ENCODE measurements at regions of chr21 and their contacts with region 1.

Region 1: GRCh38 chr21:31580866-31581276 is 78.6 kb upstream of the SOD1 start:
- DNase-seq: peak; percentile 83
- ATAC-seq: peak; percentile 82
- H3K4me3 Mint-ChIP-seq: no peak overlapping the region
- H3K27ac Mint-ChIP-seq: no peak overlapping the region
- H3K4me1 Mint-ChIP-seq: no peaks in the 10 kb centered on the region
- H3K27me3 Mint-ChIP-seq: peaks cover 3% of the 10 kb centered on the region

Region 2: DNA sequence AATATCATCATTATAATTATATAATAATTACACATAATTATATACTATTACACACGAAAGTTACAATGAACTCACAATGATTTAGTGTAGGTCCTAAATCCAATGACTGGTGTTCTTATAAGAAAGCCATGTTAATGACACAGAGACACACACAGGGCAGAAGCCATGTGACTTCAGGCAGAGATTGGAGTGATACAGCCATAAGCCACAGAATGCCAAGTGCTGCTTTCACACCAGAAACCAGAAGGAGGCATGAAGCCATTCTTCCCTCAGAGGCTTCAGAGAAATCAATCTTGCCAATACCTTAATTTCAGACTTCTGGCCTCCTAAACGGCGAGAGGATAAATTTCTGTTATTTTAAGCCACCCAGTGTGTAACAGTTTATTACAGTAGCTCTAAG is 395.2 kb before region 1 on chr21:
- CTCF ChIA-PET with region 1: interaction called, 28 read pairs
- POLR2A ChIA-PET with region 1: no interaction called
- DNase-seq: no peak
- ATAC-seq: no peak
- H3K4me3 Mint-ChIP-seq: peak overlapping the region; percentile 25
- H3K27ac Mint-ChIP-seq: peak overlapping the region; percentile 16
- H3K4me1 Mint-ChIP-seq: peaks cover 60% of the 10 kb centered on the region
- H3K27me3 Mint-ChIP-seq: no peaks in the 10 kb centered on the region

Region 3: DNA sequence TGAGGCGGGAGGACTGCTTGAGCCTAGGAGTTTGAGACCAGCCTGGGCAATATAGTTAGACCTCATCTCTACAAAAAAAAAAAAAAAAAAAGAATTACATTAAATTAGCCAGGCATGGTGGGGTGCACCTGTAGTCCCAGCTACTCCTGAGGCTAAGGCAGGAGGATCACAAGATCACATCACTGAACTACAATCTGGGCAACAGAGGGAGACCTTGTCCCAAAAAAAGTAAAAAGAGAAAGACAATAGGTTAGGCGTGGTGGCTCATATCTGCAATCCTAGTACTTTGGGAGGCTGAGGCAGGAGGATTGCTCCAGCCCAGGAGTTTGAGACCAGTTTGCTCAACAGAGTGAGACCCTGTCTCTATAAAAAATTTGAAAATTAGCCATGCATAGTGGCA is 367.1 kb before region 1 on chr21:
- CTCF ChIA-PET with region 1: interaction called, 12 read pairs
- POLR2A ChIA-PET with region 1: no interaction called
- DNase-seq: no peak
- ATAC-seq: no peak
- H3K4me3 Mint-ChIP-seq: no peak overlapping the region
- H3K27ac Mint-ChIP-seq: no peak overlapping the region
- H3K4me1 Mint-ChIP-seq: no peaks in the 10 kb centered on the region
- H3K27me3 Mint-ChIP-seq: no peaks in the 10 kb centered on the region

Region 4: GRCh38 chr21:31558962-31559367 is 21.9 kb before region 1 on chr21:
- CTCF ChIA-PET with region 1: interaction called, 35 read pairs
- POLR2A ChIA-PET with region 1: interaction called, 3 read pairs
- DNase-seq: peak; percentile 95
- ATAC-seq: peak; percentile 92
- H3K4me3 Mint-ChIP-seq: peak overlapping the region; percentile 85
- H3K27ac Mint-ChIP-seq: no peak overlapping the region
- H3K4me1 Mint-ChIP-seq: peaks cover 45% of the 10 kb centered on the region
- H3K27me3 Mint-ChIP-seq: peaks cover 20% of the 10 kb centered on the region

Region 5: GRCh38 chr21:31629972-31630711 is 49.3 kb after region 1 on chr21:
- CTCF ChIA-PET with region 1: no interaction called
- POLR2A ChIA-PET with region 1: no interaction called
- DNase-seq: no peak
- ATAC-seq: no peak
- H3K4me3 Mint-ChIP-seq: no peak overlapping the region
- H3K27ac Mint-ChIP-seq: no peak overlapping the region
- H3K4me1 Mint-ChIP-seq: no peaks in the 10 kb centered on the region
- H3K27me3 Mint-ChIP-seq: peaks cover 5% of the 10 kb centered on the region